Activated CD8-positive, alpha-beta T cell treated with anti-CD3 and anti-CD28 coated beads, Interleukin-2, amount 10 ng/mL, durations not matched to agents 7 days and 5 days (primary cell): ENCODE measurements at regions of chr12 and their contacts with region 1.

Region 1: DNA sequence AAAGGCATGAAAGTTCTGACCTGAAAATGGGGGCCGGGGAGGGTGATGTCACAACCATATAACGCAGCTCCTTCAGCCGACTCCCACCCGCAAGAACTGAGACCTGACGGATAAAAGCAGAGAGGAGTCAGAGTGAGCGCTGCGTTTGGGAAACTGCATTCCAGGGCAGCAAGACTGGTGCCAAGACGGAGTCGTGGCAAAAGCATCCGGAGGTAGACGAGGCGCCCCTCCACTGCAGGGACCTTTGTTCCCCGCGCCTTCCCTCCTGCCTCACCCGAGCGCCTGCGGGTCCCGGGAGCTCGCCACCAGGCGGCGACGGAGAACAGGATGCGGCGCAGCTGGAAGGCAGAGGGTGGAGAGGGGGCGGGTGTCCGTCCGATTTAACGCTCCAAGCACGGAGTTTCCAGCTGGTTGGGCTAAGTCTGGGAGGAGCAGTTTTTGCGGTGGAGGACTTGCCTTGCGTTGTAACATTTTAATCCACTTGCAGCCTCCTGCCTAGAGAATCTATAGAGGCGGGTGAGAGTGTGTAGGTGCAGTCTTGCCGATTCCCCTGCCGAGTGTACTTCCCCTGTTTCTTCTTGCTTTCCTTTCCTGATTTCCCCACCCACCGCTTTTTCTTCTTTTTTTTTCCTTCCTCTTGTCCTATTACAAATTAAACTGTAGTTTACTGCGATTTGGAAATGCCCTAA is 1.2 kb upstream of the CPNE8 start:
- DNase-seq: peak; percentile 68
- ATAC-seq: peak; percentile 84
- H3K4me3 Mint-ChIP-seq: peak overlapping the region; percentile 78
- H3K27ac Mint-ChIP-seq: no peak overlapping the region
- H3K4me1 Mint-ChIP-seq: peaks cover 25% of the 10 kb centered on the region
- H3K27me3 Mint-ChIP-seq: peaks cover 26% of the 10 kb centered on the region

Region 2: DNA sequence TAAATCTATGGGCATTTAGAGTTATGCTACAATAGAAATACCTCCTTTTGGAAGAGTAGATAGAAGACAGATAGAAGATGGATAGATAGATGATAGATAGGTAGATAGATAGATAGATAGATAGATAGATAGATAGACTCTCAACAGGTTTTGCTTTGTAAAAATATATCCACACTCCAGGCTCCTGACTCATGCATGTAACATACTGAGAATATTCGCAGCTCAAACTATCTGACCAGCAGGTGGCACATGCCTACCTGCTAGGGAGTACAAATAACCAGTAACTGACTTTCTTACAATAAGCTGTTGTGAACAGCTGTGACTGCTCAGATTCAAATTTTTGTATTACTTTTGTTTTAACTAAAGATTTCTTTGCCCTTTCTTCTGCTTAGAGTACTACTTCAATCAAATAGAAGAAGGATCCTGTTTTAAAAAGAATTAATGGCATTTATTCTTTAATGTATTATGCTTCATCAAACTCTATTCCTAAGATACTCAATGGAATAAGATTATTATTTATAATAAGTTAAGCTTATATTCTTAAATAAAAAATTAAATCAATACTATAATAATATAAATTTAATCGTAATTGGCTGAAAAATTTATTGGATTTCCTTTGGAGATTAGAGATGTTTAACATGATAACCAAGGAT is 14.5 kb after region 1 on chr12:
- CTCF ChIA-PET with region 1: interaction called, 11 read pairs
- POLR2A ChIA-PET with region 1: no interaction called
- DNase-seq: peak; percentile 25
- ATAC-seq: no peak
- H3K4me3 Mint-ChIP-seq: no peak overlapping the region
- H3K27ac Mint-ChIP-seq: no peak overlapping the region
- H3K4me1 Mint-ChIP-seq: no peaks in the 10 kb centered on the region
- H3K27me3 Mint-ChIP-seq: no peaks in the 10 kb centered on the region

Region 3: DNA sequence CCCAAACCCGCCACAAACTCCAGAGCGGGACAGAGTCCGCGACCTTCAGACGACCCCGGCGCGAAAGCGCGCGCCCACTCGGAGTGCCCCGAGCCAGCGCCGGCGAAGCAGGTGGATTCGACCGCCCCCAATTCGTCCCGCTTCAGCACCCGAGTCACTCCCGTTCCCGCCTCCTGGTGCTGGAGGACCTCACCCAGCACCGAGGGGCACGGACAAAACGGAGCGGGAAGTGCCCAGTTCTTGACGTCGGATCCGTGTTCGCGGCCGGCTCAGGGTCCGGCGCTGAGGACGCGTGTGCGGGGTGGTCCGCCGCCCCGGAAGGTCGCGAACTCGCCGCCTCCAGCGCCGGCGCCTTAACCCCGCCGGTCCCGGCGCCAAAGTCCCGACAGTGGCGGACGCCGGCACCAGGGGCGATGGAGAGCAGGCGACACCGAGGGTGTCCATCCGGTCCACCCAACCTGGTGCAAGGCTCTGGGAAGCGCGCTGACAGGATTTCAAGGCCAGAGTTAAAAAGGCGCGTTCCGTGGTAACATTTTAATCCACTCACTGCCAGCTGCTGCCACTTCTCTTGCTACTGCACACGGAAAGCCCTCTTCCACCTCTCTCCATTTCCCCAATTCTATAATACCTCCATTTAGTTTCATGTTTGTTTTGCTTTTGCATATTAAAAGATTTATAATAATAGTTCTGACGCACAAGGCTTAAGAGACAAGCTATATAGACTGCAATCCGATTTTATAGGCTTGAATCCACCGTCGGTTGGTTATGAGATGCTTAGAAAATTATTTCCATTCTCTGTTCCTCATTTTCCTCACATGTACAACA is 238.8 kb after region 1 on chr12:
- CTCF ChIA-PET with region 1: no interaction called
- POLR2A ChIA-PET with region 1: no interaction called
- DNase-seq: peak; percentile 47
- ATAC-seq: peak; percentile 81
- H3K4me3 Mint-ChIP-seq: peak overlapping the region; percentile 7
- H3K27ac Mint-ChIP-seq: no peak overlapping the region
- H3K4me1 Mint-ChIP-seq: no peaks in the 10 kb centered on the region
- H3K27me3 Mint-ChIP-seq: peaks cover 15% of the 10 kb centered on the region